Activated naive CD4-positive, alpha-beta T cell treated with anti-CD3 and anti-CD28 coated beads for 36 hours (primary cell): ENCODE measurements at regions of chr4 and their contacts with region 1.

Region 1: DNA sequence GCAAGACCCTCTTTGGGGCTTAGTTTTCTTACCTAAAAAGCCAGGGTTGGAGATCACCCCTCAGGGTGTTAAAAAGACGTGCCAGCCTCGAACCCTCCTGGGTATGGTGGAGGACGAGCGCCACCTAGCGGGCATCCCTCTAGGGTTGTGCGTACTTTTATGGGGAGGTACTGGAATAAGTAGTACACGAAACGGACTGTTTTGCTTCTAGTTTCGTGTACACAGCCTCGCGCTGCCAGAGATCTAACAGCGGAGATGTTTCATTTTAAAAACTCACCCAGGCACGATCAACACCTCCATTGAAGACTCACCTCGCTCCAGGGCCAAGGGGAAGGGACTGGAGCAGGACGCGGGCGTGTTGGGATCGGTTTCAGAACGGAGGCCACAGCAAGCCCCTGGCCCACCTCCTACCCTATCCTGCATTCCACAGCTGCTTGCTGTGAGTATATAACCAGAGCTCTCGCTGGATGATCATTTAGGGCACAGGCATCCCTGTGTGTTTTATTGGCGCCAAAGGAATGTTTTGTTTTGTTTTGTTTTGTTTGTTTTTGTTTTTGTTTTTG is 4.8 kb upstream of the NKX3-2 start:
- DNase-seq: peak; percentile 94
- H3K4me3 Mint-ChIP-seq: peak overlapping the region; percentile 69
- H3K27ac Mint-ChIP-seq: no peak overlapping the region
- H3K4me1 Mint-ChIP-seq: peaks cover 28% of the 10 kb centered on the region
- H3K27me3 Mint-ChIP-seq: peaks cover 65% of the 10 kb centered on the region

Region 2: DNA sequence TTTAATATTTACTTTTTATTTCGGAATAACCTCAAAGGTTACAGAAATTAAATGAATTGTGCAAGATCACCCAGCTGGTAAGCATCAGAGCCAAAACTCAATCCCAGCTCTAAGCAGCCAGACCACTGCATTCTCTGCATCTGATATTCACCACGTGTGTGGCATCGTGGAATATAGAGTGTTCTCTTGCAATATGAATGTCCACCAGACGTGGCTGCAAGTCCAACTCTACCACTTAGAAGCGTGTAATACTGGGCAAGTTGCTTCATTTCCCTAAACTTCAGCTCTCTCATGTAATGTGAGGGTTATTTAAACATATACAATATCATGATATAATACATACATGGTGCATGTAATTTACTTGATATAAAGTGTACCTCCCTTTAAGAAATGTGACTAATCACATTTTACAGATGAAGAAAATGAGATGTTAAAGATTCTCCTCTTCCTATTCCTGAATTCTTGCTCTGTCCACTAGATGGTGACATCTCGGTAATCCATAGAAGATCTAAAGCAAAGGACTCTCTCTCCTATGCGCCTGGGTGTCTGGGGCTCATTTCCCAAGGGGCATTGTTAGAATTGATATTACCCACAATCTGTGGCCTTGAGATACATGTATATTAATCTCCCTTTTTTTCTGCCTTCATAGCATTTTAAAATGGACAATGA is 870.0 kb before region 1 on chr4:
- CTCF ChIA-PET with region 1: no interaction called
- intact Hi-C with region 1: loop called (anchors 1 kb)
- DNase-seq: no peak
- H3K4me3 Mint-ChIP-seq: no peak overlapping the region
- H3K27ac Mint-ChIP-seq: no peak overlapping the region
- H3K4me1 Mint-ChIP-seq: no peaks in the 10 kb centered on the region
- H3K27me3 Mint-ChIP-seq: peaks cover 9% of the 10 kb centered on the region

Region 3: DNA sequence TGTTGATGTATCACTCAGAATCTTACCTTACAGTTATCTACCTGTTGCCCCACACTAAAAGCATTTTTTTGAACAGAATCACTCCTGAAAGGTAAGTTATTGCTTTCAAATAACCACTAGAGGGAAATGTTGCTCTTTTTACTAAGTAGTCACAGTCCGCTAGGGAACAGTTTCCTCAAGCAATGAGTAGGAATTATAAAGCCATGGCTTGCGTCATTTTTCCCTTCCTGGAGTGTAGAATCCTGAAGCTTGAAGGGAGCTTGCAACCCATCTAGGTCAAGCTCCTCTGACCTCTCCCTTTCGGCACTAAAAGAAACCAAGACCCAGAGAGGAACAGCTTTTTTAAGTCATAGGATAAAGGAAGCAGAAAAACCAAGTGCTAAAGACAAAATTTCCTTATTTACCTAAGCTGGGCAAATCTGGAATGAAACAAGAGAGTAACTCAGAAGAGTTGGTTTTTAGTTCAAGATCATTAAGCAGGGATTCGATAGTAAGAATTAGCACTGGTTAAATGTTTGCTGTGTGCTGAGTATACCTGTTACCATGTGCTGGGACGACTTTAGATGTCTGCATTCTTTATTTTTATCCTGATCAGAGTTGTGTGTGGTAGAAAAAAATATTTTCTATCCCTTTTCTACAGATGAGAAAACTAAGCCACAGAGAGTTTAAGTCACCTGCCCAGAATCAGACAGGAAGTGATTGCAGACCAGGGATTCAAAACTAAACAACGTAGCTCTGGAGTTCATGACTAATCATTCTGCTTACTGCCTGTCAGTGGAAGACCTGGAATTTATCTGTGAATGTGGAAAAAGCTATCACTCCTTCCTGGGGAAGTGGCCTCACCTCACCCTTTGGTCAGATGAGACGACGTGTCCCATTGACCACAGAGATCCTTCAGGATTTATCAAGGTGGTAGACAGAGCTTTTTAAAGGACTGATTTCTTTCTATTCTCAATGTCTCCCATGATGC is 696.4 kb before region 1 on chr4:
- CTCF ChIA-PET with region 1: interaction called, 7 read pairs
- intact Hi-C with region 1: loop called (anchors 1 kb)
- DNase-seq: no peak
- H3K4me3 Mint-ChIP-seq: no peak overlapping the region
- H3K27ac Mint-ChIP-seq: no peak overlapping the region
- H3K4me1 Mint-ChIP-seq: no peaks in the 10 kb centered on the region
- H3K27me3 Mint-ChIP-seq: peaks cover 10% of the 10 kb centered on the region

Region 4: GRCh38 chr4:13236485-13236884 is 312.6 kb before region 1 on chr4:
- CTCF ChIA-PET with region 1: no interaction called
- intact Hi-C with region 1: no loop called
- DNase-seq: no peak
- H3K4me3 Mint-ChIP-seq: no peak overlapping the region
- H3K27ac Mint-ChIP-seq: no peak overlapping the region
- H3K4me1 Mint-ChIP-seq: no peaks in the 10 kb centered on the region
- H3K27me3 Mint-ChIP-seq: no peaks in the 10 kb centered on the region

Region 5: GRCh38 chr4:13403833-13404232 is 145.2 kb before region 1 on chr4:
- CTCF ChIA-PET with region 1: no interaction called
- intact Hi-C with region 1: loop called (anchors 5 kb)
- DNase-seq: no peak
- H3K4me3 Mint-ChIP-seq: no peak overlapping the region
- H3K27ac Mint-ChIP-seq: no peak overlapping the region
- H3K4me1 Mint-ChIP-seq: no peaks in the 10 kb centered on the region
- H3K27me3 Mint-ChIP-seq: no peaks in the 10 kb centered on the region

Region 6: GRCh38 chr4:13527981-13528820 is 20.9 kb before region 1 on chr4:
- CTCF ChIA-PET with region 1: interaction called, 9 read pairs
- intact Hi-C with region 1: loop called (anchors 1 kb)
- DNase-seq: peak; percentile 57
- H3K4me3 Mint-ChIP-seq: peak overlapping the region; percentile 43
- H3K27ac Mint-ChIP-seq: no peak overlapping the region
- H3K4me1 Mint-ChIP-seq: peaks cover 35% of the 10 kb centered on the region
- H3K27me3 Mint-ChIP-seq: peaks cover 85% of the 10 kb centered on the region